H1 (cell line): ENCODE measurements at regions of chr16 and their contacts with region 1.

Region 1: GRCh38 chr16:67017810-67018488 is 11.0 kb upstream of the CBFB start:
- DNase-seq: peak; percentile 78 to 96
- H3K4me3 ChIP-seq: no peak overlapping the region
- H3K27ac ChIP-seq: no peak overlapping the region
- H3K4me1 ChIP-seq: peaks cover 0 to 6% (median 4%) of the 10 kb centered on the region in 4 experiments; a peak in 4 of 7 replicates
- H3K27me3 ChIP-seq: peaks cover 16 to 35% (median 26%) of the 10 kb centered on the region in 4 experiments
- CTCF ChIP-seq: peak; percentile 82 to 99 (median 89)
- EP300 ChIP-seq: no peak
- POLR2A ChIP-seq: no peak
- RAD21 ChIP-seq: peak; percentile 89 to 91

Region 2: DNA sequence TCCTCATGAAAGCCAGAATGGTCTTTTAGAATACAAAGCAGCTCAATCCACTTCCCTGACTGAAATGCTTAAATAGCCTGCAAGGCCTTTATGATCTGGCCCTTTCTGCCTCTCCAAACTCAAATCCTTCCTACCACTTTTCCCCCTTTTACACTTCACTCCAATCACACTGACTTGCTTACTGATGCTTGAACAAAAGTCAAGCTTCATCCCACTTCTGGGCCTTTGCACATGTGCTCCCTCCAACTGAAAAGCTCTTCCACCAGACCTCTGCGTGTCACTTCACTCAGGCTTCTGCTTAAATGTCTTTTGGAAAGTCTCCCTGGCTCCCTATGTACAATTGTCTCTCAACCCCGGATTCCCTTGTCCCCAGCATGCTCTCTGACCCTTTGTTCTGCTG is 203.2 kb before region 1 on chr16:
- CTCF ChIA-PET with region 1: no interaction called
- POLR2A ChIA-PET with region 1: no interaction called
- DNase-seq: no peak
- H3K4me3 ChIP-seq: no peak overlapping the region
- H3K27ac ChIP-seq: no peak overlapping the region
- H3K4me1 ChIP-seq: no peaks in the 10 kb centered on the region
- H3K27me3 ChIP-seq: no peaks in the 10 kb centered on the region
- CTCF ChIP-seq: no peak
- EP300 ChIP-seq: no peak
- POLR2A ChIP-seq: no peak
- RAD21 ChIP-seq: no peak

Region 3: GRCh38 chr16:66872943-66873684 is 144.8 kb before region 1 on chr16:
- CTCF ChIA-PET with region 1: no interaction called
- POLR2A ChIA-PET with region 1: no interaction called
- DNase-seq: peak; percentile 86 to 92
- H3K4me3 ChIP-seq: peak overlapping the region; percentile 17 to 64 (median 48); a peak in 7 of 8 replicates
- H3K27ac ChIP-seq: peak overlapping the region; percentile 52; the same call in 1 of the 2 replicates
- H3K4me1 ChIP-seq: peaks cover 0 to 6% (median 2%) of the 10 kb centered on the region in 4 experiments; a peak in 4 of 7 replicates
- H3K27me3 ChIP-seq: no peaks in the 10 kb centered on the region; a peak in 1 of 7 replicates
- CTCF ChIP-seq: peak; percentile 76 to 89 (median 88)
- EP300 ChIP-seq: no peak
- POLR2A ChIP-seq: peak in 1 of 2 experiments; percentile 58; a peak in 1 of 3 replicates
- RAD21 ChIP-seq: peak; percentile 21 to 54

Region 4: DNA sequence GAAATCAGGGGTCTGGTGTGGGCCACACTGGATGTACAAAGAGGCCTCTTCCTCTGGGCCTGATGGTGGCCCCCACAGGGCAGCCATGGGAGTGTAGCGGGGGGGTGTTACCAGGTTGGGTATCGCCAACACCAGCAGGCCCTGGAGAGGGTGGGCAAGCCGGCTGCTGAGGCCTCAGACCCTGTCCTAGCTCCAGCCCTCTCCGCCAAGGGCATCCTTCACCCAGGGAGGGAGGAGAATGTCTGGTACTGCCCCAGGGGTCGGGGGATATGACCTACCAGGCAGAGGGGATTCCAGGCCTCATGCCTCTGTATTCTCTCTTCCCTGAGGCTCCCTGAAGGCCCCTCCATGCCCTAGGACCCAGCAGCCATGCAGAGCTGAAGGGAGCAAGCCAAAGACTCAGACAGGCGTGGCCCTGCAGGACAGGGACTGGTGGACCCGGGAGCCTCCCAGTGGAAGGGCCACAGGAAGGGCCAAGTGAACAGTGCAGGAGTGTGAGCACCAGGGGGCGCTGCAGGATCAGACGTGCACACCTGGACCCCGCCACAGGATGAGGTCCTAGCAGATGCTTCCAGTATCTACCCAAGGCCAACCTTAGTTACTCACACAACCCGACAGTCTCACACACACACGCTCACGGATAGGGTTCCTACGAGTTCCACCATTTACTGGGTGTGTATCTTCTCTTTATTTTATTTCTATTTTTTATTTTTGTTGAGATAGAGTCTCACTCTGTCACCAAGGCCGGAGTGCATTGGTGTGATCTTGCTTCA is 40.4 kb before region 1 on chr16:
- CTCF ChIA-PET with region 1: interaction called, 89 read pairs
- POLR2A ChIA-PET with region 1: interaction called, 3 read pairs
- DNase-seq: peak; percentile 56 to 98
- H3K4me3 ChIP-seq: no peak overlapping the region
- H3K27ac ChIP-seq: no peak overlapping the region
- H3K4me1 ChIP-seq: no peaks in the 10 kb centered on the region; a peak in 1 of 7 replicates
- H3K27me3 ChIP-seq: no peaks in the 10 kb centered on the region
- CTCF ChIP-seq: peak; percentile 94 to 98 (median 97)
- EP300 ChIP-seq: no peak
- POLR2A ChIP-seq: no peak
- RAD21 ChIP-seq: peak; percentile 99 to 100

Region 5: DNA sequence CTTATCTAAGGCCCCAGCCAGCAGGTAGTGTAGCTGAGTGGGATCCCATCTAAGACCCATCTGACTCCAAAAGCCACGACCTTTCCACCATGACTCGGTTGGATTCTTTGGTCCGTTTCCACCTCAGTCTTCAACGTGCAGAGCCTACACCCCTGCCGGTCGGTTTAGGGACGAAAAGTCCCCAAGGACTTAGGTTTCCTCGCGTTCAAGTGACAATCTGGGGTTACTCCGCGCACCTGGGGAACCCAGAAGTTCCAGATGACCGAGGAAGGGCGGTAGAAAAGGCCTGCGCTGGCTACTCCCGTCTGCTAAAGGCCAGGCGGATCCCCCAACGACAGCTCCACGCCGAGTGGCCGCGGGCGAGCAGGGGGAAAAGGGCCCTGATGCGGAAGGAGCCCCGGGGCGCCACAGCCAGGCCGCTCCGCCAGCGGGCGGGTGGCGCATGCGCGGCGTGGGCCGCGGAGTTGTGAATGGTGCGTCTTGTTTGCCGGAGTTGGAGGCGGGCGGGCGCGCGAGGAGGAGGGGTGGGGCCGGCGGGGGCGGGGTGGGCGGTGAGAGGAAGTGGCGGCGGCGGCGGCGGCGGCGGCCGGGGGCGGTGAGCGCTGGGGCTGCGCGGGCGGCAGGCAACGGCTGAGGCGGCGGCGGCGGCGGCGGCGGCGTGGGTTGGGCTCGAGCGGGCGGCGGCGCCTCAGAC is 10.8 kb after region 1 on chr16 and contains the start of gene CBFB:
- CTCF ChIA-PET with region 1: interaction called, 36 read pairs
- POLR2A ChIA-PET with region 1: interaction called, 6 read pairs
- DNase-seq: peak in 1 of 2 experiments; percentile 91
- H3K4me3 ChIP-seq: peak within 1 kb of the TSS; percentile 54 to 88 (median 84)
- H3K27ac ChIP-seq: no peak within 1 kb of the TSS; the same call in 1 of the 2 replicates
- H3K4me1 ChIP-seq: peaks cover 0 to 4% (median 1%) of the 10 kb centered on the region in 4 experiments; a peak in 2 of 7 replicates
- H3K27me3 ChIP-seq: peaks cover 0 to 7% (median 3%) of the 10 kb centered on the region in 4 experiments; a peak in 2 of 7 replicates
- CTCF ChIP-seq: peak in 2 of 3 experiments; percentile 8 to 12; a peak in 1 of 4 replicates
- EP300 ChIP-seq: no peak
- POLR2A ChIP-seq: peak in 1 of 2 experiments; percentile 35; a peak in 1 of 3 replicates
- RAD21 ChIP-seq: no peak
- total RNA-seq, gene CBFB: 31.6 and 34.3 TPM in 2 replicates

Region 6: GRCh38 chr16:67137605-67138004 is 119.7 kb after region 1 on chr16:
- CTCF ChIA-PET with region 1: interaction called, 11 read pairs
- POLR2A ChIA-PET with region 1: no interaction called
- DNase-seq: no peak
- H3K4me3 ChIP-seq: no peak overlapping the region
- H3K27ac ChIP-seq: no peak overlapping the region
- H3K4me1 ChIP-seq: no peaks in the 10 kb centered on the region
- H3K27me3 ChIP-seq: no peaks in the 10 kb centered on the region
- CTCF ChIP-seq: no peak
- EP300 ChIP-seq: no peak
- POLR2A ChIP-seq: no peak
- RAD21 ChIP-seq: no peak

Region 7: GRCh38 chr16:67173808-67174705 is 156.1 kb after region 1 on chr16:
- CTCF ChIA-PET with region 1: interaction called, 21 read pairs
- POLR2A ChIA-PET with region 1: interaction called, 7 read pairs
- DNase-seq: peak in 1 of 2 experiments; percentile 78
- H3K4me3 ChIP-seq: peak overlapping the region; percentile 27 to 57 (median 34)
- H3K27ac ChIP-seq: no peak overlapping the region
- H3K4me1 ChIP-seq: peaks cover 0 to 40% (median 30%) of the 10 kb centered on the region in 4 experiments; a peak in 6 of 7 replicates
- H3K27me3 ChIP-seq: peaks cover 50 to 90% (median 86%) of the 10 kb centered on the region in 4 experiments
- CTCF ChIP-seq: peak in 2 of 3 experiments; percentile 14 to 15; a peak in 2 of 4 replicates
- EP300 ChIP-seq: no peak
- POLR2A ChIP-seq: no peak
- RAD21 ChIP-seq: peak; percentile 7 to 23; a peak in 2 of 4 replicates